H1 (cell line): ENCODE measurements at regions of chr15 and their contacts with region 1.

Region 1: GRCh38 chr15:89893696-89894455 is at the start of gene AP3S2:
- DNase-seq: peak; percentile 70 to 89
- H3K4me3 ChIP-seq: peak within 1 kb of the TSS; percentile 92 to 99 (median 98)
- H3K27ac ChIP-seq: peak within 1 kb of the TSS; percentile 81
- H3K4me1 ChIP-seq: no peaks in the 10 kb centered on the region; a peak in 2 of 7 replicates
- H3K27me3 ChIP-seq: no peaks in the 10 kb centered on the region
- CTCF ChIP-seq: no peak
- EP300 ChIP-seq: peak in 1 of 2 experiments; percentile 27; a peak in 1 of 3 replicates
- POLR2A ChIP-seq: peak; percentile 57 to 89
- RAD21 ChIP-seq: peak in 1 of 2 experiments; percentile 12; a peak in 1 of 4 replicates
- total RNA-seq, gene AP3S2: 42.3 and 45.4 TPM in 2 replicates

Region 2: DNA sequence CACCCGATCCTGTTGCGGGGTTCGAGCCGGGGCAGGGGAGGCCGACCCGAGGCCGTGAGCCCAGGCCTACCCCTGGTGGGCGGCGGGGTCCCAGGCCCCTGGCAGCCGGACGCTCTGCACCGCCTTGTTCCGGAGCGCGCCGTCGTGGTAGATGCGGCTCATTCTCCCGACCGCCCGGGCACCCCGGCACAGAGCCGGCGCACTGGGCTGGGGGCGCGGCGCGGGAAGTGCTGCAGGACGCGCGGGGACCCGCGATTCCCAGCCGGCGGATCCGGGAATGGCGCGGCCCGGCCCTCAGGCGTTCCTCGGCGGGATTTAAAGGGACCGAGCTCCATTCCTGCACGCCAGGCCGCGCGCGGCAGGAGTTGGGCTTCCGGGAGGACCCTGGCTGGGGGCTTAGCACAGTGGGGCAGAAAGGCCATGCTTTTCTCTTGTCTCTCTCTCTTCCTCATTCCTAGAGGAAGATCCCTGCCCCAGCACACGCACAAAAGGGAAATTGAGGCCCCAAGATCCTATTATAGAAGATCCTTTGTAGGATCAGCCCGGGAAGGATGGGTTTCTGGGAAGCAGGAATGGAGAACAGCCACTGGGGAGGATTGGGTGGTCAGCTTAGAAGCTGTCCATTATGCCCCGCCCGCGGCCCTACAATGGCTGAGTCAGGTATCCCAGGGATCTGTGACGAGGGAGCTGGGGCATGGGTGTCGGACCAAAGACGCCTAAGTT is 19.0 kb after region 1 on chr15 and contains the start of gene ARPIN:
- CTCF ChIA-PET with region 1: interaction called, 27 read pairs
- POLR2A ChIA-PET with region 1: interaction called, 10 read pairs
- DNase-seq: peak in 1 of 2 experiments; percentile 76
- H3K4me3 ChIP-seq: peak within 1 kb of the TSS; percentile 50 to 72 (median 56)
- H3K27ac ChIP-seq: 0 out of 2 replicates have a peak within 1 kb of the TSS, but pooled peaks have one; percentile 26
- H3K4me1 ChIP-seq: peaks cover 3 to 9% (median 6%) of the 10 kb centered on the region in 4 experiments; a peak in 6 of 7 replicates
- H3K27me3 ChIP-seq: 0 out of 7 replicates have a peak, but pooled peaks cover 0 to 4% (median 2%) of the 10 kb centered on the region in 4 experiments
- CTCF ChIP-seq: no peak
- EP300 ChIP-seq: no peak
- POLR2A ChIP-seq: peak in 1 of 2 experiments; percentile 49; a peak in 1 of 3 replicates
- RAD21 ChIP-seq: no peak
- total RNA-seq, gene ARPIN: 3.1 and 3.9 TPM in 2 replicates

Region 3: GRCh38 chr15:90071208-90071807 is 177.4 kb after region 1 on chr15:
- CTCF ChIA-PET with region 1: interaction called, 12 read pairs
- POLR2A ChIA-PET with region 1: no interaction called
- DNase-seq: no peak
- H3K4me3 ChIP-seq: no peak overlapping the region
- H3K27ac ChIP-seq: no peak overlapping the region
- H3K4me1 ChIP-seq: peaks cover 2 to 6% (median 5%) of the 10 kb centered on the region in 4 experiments; a peak in 5 of 7 replicates
- H3K27me3 ChIP-seq: no peaks in the 10 kb centered on the region
- CTCF ChIP-seq: peak; percentile 44 to 57 (median 54)
- EP300 ChIP-seq: no peak
- POLR2A ChIP-seq: no peak
- RAD21 ChIP-seq: peak; percentile 49 to 65

Region 4: DNA sequence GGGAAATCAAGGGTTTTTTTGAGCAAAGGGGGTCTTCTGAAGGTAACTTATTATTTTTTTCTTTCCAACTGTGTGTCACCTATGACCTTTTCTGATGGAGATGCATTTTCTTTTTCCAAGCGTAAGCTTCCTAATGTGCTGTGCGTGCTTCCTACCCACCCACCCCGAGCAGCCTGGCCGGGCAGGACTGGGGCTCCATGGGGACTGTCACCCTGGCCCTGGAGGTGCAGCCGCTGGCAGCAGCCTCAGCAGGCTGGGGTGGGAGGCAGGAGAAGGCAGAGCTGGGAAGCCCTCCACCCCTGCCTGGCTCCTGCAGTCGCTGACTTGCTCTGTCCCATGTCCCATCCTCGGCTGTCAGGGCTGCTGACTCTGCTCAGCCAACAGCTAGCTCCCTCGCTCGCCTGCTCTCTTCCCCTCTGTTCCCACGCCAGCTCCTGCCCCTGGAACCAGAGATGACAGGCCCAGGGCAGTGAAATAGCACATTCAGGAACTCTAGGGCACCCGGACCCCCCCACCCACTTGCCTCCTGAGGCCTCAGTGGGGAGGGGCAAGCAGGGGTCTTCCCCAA is 187.0 kb after region 1 on chr15:
- CTCF ChIA-PET with region 1: interaction called, 46 read pairs
- POLR2A ChIA-PET with region 1: no interaction called
- DNase-seq: no peak
- H3K4me3 ChIP-seq: no peak overlapping the region
- H3K27ac ChIP-seq: no peak overlapping the region
- H3K4me1 ChIP-seq: peaks cover 0 to 7% (median 3%) of the 10 kb centered on the region in 4 experiments; a peak in 4 of 7 replicates
- H3K27me3 ChIP-seq: no peaks in the 10 kb centered on the region
- CTCF ChIP-seq: no peak
- EP300 ChIP-seq: no peak
- POLR2A ChIP-seq: no peak
- RAD21 ChIP-seq: no peak